Endothelial cell of umbilical vein (primary cell): ENCODE measurements at regions of chr1 and their contacts with region 1.

Region 1: GRCh38 chr1:155859234-155859829 is at the start of gene SYT11:
- DNase-seq: peak; percentile 95
- H3K4me3 ChIP-seq: peak within 1 kb of the TSS; percentile 52 to 79 (median 54)
- H3K27ac ChIP-seq: peak within 1 kb of the TSS; percentile 95
- H3K4me1 ChIP-seq: peaks cover 21% of the 10 kb centered on the region
- H3K27me3 ChIP-seq: no peaks in the 10 kb centered on the region
- CTCF ChIP-seq: no peak
- POLR2A ChIP-seq: no peak
- total RNA-seq, gene SYT11: 33.7 and 36.5 TPM in 2 replicates

Region 2: DNA sequence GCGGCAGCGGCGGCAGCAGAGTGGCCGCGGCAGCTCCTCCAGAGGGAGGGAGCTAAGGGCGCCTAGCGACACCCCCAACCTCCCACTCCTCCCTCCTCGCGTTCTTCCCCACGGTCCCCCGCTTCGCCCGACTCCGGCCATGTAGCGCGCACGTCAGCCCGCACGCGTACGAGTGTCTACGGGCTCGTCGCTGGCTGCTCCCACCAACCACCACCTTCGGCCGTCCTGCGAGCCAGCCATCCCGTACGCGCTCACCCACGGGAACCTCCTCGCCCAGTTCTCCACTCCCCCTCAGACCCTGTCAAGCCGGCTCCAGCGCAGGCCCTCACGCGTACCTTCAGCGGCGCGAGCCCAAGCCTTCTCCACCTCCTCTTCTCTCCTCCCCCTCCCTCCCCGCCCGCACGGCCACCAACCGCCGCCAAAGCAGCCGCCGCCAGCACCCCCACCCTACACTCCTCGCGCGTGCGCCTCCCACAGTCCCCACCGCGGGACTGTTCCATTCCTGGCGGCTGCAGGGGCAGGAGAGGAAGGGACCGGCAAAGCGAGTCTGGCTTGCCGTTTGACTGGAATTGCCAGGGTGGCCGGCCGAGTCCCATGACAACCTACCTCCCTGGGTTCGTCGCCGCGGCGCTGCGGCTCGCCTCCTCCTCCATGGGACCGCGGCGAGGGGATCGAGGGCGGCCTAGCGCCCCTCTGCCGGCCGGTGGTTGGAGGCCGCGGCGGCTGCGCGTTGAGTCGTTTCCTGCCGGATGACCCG is 170.8 kb before region 1 on chr1 and contains the start of gene YY1AP1:
- CTCF ChIA-PET with region 1: no interaction called
- POLR2A ChIA-PET with region 1: no interaction called
- dilution Hi-C with region 1: no loop called
- intact Hi-C with region 1: loop called (anchors 10 kb)
- DNase-seq: peak; percentile 90
- H3K4me3 ChIP-seq: peak within 1 kb of the TSS; percentile 49 to 92 (median 92)
- H3K27ac ChIP-seq: peak within 1 kb of the TSS; percentile 84
- H3K4me1 ChIP-seq: peaks cover 15% of the 10 kb centered on the region
- H3K27me3 ChIP-seq: no peaks in the 10 kb centered on the region
- CTCF ChIP-seq: no peak
- POLR2A ChIP-seq: peak; percentile 55
- total RNA-seq, gene YY1AP1: 42.0 and 42.3 TPM in 2 replicates

Region 3: GRCh38 chr1:155744711-155745283 is 114.5 kb before region 1 on chr1:
- CTCF ChIA-PET with region 1: no interaction called
- POLR2A ChIA-PET with region 1: no interaction called
- dilution Hi-C with region 1: no loop called
- intact Hi-C with region 1: loop called (anchors 1 kb)
- DNase-seq: no peak
- H3K4me3 ChIP-seq: peak overlapping the region; percentile 38 to 80 (median 69)
- H3K27ac ChIP-seq: peak overlapping the region; percentile 24
- H3K4me1 ChIP-seq: no peaks in the 10 kb centered on the region
- H3K27me3 ChIP-seq: no peaks in the 10 kb centered on the region
- CTCF ChIP-seq: no peak
- POLR2A ChIP-seq: no peak

Region 4: GRCh38 chr1:155893389-155894142 is 34.2 kb after region 1 on chr1:
- CTCF ChIA-PET with region 1: interaction called, 6 read pairs
- POLR2A ChIA-PET with region 1: interaction called, 14 read pairs
- dilution Hi-C with region 1: no loop called
- intact Hi-C with region 1: loop called (anchors 1 kb)
- DNase-seq: peak; percentile 93
- H3K4me3 ChIP-seq: peak overlapping the region in 2 of 3 experiments; percentile 16 to 49
- H3K27ac ChIP-seq: peak overlapping the region; percentile 100
- H3K4me1 ChIP-seq: peaks cover 40% of the 10 kb centered on the region
- H3K27me3 ChIP-seq: no peaks in the 10 kb centered on the region
- CTCF ChIP-seq: no peak
- POLR2A ChIP-seq: no peak

Region 5: GRCh38 chr1:155910621-155911121 is 51.3 kb after region 1 on chr1:
- CTCF ChIA-PET with region 1: no interaction called
- POLR2A ChIA-PET with region 1: no interaction called
- dilution Hi-C with region 1: no loop called
- intact Hi-C with region 1: loop called (anchors 1 kb)
- DNase-seq: peak; percentile 67
- H3K4me3 ChIP-seq: peak overlapping the region; percentile 61 to 85 (median 67)
- H3K27ac ChIP-seq: peak overlapping the region; percentile 69
- H3K4me1 ChIP-seq: peaks cover 13% of the 10 kb centered on the region
- H3K27me3 ChIP-seq: no peaks in the 10 kb centered on the region
- CTCF ChIP-seq: no peak
- POLR2A ChIP-seq: no peak

Region 6: GRCh38 chr1:156060937-156061636 is 201.8 kb after region 1 on chr1 and contains the start of gene RAB25:
- CTCF ChIA-PET with region 1: no interaction called
- POLR2A ChIA-PET with region 1: no interaction called
- dilution Hi-C with region 1: no loop called
- intact Hi-C with region 1: no loop called
- DNase-seq: no peak
- H3K4me3 ChIP-seq: no peak within 1 kb of the TSS
- H3K27ac ChIP-seq: no peak within 1 kb of the TSS
- H3K4me1 ChIP-seq: no peaks in the 10 kb centered on the region
- H3K27me3 ChIP-seq: no peaks in the 10 kb centered on the region
- CTCF ChIP-seq: no peak
- POLR2A ChIP-seq: no peak
- total RNA-seq, gene RAB25: not detected in 2 replicates